Posterior vena cava (tissue), 2 donors: ENCODE measurements at regions of chr2 and their contacts with region 1.

Region 1: DNA sequence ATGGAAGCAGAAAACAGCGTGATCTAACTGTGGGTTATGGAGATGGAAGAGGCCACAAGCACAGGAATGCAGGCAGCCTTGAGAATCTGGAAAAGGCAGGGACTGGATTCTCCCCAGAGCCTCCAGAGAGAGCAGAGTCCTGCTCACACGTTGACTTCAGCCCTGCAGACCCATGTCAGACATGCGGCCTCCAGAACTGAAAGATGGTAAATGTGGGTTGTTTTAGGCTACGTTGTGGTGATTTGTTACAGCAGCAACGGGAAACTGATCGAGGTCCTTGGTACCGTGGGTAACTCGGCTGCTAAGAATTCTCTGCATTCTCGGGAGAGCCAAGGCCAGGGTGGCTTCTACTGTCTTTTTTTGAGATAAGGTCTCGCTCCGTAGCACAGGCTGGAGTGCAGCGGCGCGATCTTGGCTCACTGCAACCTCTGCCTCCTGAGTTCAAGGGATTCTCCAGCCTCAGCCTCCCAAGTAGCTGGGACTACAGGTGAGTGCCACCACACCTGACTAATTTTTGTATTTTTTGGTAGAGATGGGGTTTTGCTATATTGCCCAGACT is 97.1 kb downstream of the ACKR3 start:
- DNase-seq: no peak

Region 2: GRCh38 chr2:236619910-236620612 is 46.7 kb before region 1 on chr2:
- intact Hi-C with region 1: loop called in 1 of 2 experiments (anchors 1 kb)
- DNase-seq: no peak

Region 3: DNA sequence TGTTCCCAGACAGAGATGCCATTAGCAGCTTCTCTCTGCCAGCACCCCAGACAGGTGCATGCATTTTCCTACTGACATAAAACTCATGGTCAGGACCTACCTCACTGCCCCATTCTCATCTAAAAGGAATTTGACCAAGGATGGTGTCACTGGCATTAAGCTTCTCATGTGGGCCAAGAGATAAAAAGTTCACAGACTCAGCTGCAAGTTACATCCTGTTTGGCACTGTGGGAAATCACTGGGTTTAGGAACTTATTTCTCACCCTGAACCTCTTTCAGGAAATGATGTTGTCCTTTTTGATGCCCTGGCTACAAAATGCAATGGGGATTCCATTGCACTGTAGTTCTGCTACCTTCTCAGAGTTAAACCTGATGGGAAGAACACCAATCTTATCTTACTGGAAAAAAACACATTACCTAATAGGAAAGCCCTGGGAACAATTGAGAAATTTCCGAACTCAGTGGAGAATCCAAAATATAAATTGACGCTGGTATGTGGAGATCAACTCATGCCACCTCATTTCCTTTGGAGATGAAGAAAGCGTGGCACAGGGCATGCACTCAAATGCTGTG is 166.9 kb after region 1 on chr2:
- intact Hi-C with region 1: no loop called
- DNase-seq: no peak